ENCODE measurements at regions of chr12 and their contacts with region 1.

Region 1: GRCh38 chr12:40107098-40107802 is 1.4 kb upstream of the SLC2A13 start:
- DNase-seq: peak; percentile 65 to 91 (median 84)
- ATAC-seq: peak; percentile 37 to 50
- H3K4me3 Mint-ChIP-seq: peak overlapping the region; percentile 81 to 97 (median 90)
- H3K27ac Mint-ChIP-seq: peak overlapping the region; percentile 58 to 84 (median 75)
- H3K4me1 Mint-ChIP-seq: peaks cover 14 to 36% (median 34%) of the 10 kb centered on the region in 4 donors
- H3K27me3 Mint-ChIP-seq: peaks cover 0 to 6% (median 0%) of the 10 kb centered on the region in 5 donors

Region 2: GRCh38 chr12:40032433-40033241 is 74.6 kb before region 1 on chr12:
- POLR2A ChIA-PET with region 1: no interaction called
- DNase-seq: no peak
- ATAC-seq: no peak
- H3K4me3 Mint-ChIP-seq: no peak overlapping the region
- H3K27ac Mint-ChIP-seq: no peak overlapping the region
- H3K4me1 Mint-ChIP-seq: no peaks in the 10 kb centered on the region
- H3K27me3 Mint-ChIP-seq: no peaks in the 10 kb centered on the region

Region 3: DNA sequence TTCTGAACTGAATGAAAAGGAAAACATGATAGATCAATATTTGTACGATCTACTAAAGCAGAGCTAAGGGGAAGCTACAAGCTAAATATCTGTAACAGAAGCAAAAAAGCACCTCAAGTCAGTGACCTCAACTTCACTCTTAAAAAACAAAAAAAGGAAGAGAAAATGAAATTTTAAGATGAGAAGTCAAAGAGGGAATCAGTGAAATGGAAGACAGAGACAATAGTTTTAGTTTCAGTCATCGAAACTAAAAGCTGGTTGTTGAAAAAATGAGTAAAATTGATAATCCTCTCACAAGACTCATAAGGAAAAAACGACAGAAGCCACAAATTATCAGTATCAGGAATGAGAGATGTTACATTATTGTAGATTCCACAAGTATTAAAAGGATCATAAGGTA is 10.6 kb after region 1 on chr12:
- POLR2A ChIA-PET with region 1: interaction called, 10 read pairs
- DNase-seq: no peak
- ATAC-seq: no peak
- H3K4me3 Mint-ChIP-seq: no peak overlapping the region
- H3K27ac Mint-ChIP-seq: no peak overlapping the region
- H3K4me1 Mint-ChIP-seq: no peaks in the 10 kb centered on the region
- H3K27me3 Mint-ChIP-seq: peaks cover 2 to 29% (median 3%) of the 10 kb centered on the region in 5 donors

Region 4: GRCh38 chr12:40342010-40342409 is 234.8 kb after region 1 on chr12:
- POLR2A ChIA-PET with region 1: no interaction called
- DNase-seq: no peak
- ATAC-seq: no peak
- H3K4me3 Mint-ChIP-seq: no peak overlapping the region
- H3K27ac Mint-ChIP-seq: no peak overlapping the region
- H3K4me1 Mint-ChIP-seq: no peaks in the 10 kb centered on the region
- H3K27me3 Mint-ChIP-seq: no peaks in the 10 kb centered on the region